Transverse colon (tissue), 4 donors: ENCODE measurements at regions of chr3 and their contacts with region 1.

Region 1: DNA sequence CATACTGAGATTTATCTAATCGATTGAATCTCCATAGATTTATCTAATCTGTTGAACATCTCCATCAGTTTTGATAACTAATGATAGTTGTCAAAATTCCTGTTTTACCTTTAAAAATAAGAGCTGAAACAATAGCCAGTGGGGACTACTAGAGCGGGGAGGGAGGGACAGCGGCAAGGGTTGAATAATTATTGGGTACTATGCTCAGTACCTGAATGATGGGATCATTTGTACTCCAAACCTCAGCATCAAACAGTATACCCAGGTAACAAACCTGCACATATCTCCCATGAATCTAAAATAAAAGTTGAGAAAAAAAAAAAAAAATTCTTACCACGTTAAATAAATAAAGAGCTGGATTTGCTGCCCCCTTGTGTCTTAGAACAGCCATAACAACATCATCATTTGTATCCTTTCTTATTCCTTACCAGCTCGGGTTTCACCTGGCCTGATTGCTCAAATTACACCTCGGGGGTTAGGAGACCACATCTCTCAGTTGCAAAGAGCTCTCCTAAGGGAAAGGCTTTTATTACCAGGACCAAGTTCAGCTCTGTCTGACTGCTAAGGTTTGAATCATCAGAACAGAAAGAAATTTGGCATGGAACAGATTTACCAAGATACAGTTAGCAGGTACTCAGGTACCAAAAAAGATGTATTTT is 25.7 kb upstream of the RPL39L start:
- DNase-seq: peak; percentile 16
- H3K4me3 ChIP-seq: no peak overlapping the region
- H3K27ac ChIP-seq: no peak overlapping the region
- H3K4me1 ChIP-seq: peaks cover 0 to 4% (median 0%) of the 10 kb centered on the region in 4 donors
- H3K27me3 ChIP-seq: no peaks in the 10 kb centered on the region
- CTCF ChIP-seq: peak; percentile 71 to 80 (median 75)
- EP300 ChIP-seq: no peak
- POLR2A ChIP-seq: no peak

Region 2: DNA sequence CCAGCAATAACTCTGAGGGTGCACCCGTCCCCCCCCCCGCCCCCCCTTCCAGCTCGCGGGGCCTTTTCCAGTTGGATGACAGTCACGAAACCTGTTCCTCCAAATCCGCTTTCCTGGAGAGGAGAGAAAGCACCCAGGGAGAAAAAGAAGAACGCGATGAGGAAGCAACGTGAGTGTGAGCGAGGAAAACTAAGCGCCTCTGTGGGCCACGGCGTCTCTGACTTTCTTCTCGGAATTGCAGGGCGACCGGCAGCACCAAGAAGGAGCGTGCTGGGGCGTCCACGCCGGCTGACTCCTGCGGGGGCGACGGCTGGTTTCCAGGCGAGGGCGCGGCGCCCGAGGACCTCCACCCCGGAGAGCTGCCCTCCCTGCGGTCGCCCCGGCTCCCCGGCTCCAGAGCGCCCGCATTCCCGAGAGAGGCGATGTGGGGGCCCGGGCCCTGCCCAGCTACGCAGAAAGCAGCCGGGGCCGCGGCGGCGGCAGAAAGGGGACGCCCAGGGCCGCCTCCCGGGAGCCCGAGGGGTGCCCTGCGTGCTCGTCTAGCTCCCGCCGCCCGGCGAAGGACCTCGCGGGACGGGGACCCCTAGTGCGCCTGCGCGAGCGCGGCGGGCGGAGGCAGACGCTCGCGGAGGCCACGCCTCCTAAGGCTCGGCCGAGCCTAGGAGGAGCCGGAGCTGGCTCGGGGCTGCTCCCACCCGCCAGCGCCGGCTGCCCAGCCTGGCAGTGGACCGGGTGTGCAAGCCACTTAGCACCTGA is 337.9 kb before region 1 on chr3:
- in situ Hi-C with region 1: loop called in 1 of 4 experiments (anchors 25 kb)
- intact Hi-C with region 1: no loop called
- DNase-seq: peak; percentile 83
- H3K4me3 ChIP-seq: peak overlapping the region; percentile 46 to 92 (median 73)
- H3K27ac ChIP-seq: peak overlapping the region in 3 of 4 donors; percentile 63 to 71 (median 66)
- H3K4me1 ChIP-seq: peaks cover 0 to 32% (median 12%) of the 10 kb centered on the region in 4 donors
- H3K27me3 ChIP-seq: peaks cover 74% of the 10 kb centered on the region
- CTCF ChIP-seq: no peak
- EP300 ChIP-seq: no peak
- POLR2A ChIP-seq: no peak

Region 3: GRCh38 chr3:186849374-186849975 is 315.5 kb before region 1 on chr3:
- in situ Hi-C with region 1: loop called (anchors 5 to 25 kb)
- intact Hi-C with region 1: loop called (anchors 10 kb)
- DNase-seq: no peak
- H3K4me3 ChIP-seq: no peak overlapping the region
- H3K27ac ChIP-seq: no peak overlapping the region
- H3K4me1 ChIP-seq: no peaks in the 10 kb centered on the region
- H3K27me3 ChIP-seq: peaks cover 19% of the 10 kb centered on the region
- CTCF ChIP-seq: peak in 3 of 5 experiments; percentile 17 to 28 (median 20)
- EP300 ChIP-seq: no peak
- POLR2A ChIP-seq: no peak

Region 4: GRCh38 chr3:187027531-187028278 is 137.3 kb before region 1 on chr3:
- in situ Hi-C with region 1: no loop called
- intact Hi-C with region 1: no loop called
- DNase-seq: peak; percentile 41
- H3K4me3 ChIP-seq: no peak overlapping the region
- H3K27ac ChIP-seq: peak overlapping the region in 3 of 4 donors; percentile 14 to 37 (median 27)
- H3K4me1 ChIP-seq: peaks cover 0 to 6% (median 0%) of the 10 kb centered on the region in 4 donors
- H3K27me3 ChIP-seq: no peaks in the 10 kb centered on the region
- CTCF ChIP-seq: no peak
- EP300 ChIP-seq: no peak
- POLR2A ChIP-seq: peak; percentile 2

Region 5: GRCh38 chr3:187112934-187113793 is 51.9 kb before region 1 on chr3:
- in situ Hi-C with region 1: loop called in 1 of 4 experiments (anchors 10 kb)
- intact Hi-C with region 1: no loop called
- DNase-seq: no peak
- H3K4me3 ChIP-seq: no peak overlapping the region
- H3K27ac ChIP-seq: no peak overlapping the region
- H3K4me1 ChIP-seq: no peaks in the 10 kb centered on the region
- H3K27me3 ChIP-seq: no peaks in the 10 kb centered on the region
- CTCF ChIP-seq: peak; percentile 46 to 56 (median 54)
- EP300 ChIP-seq: no peak
- POLR2A ChIP-seq: no peak

Region 6: GRCh38 chr3:187247398-187247797 is 82.4 kb after region 1 on chr3:
- in situ Hi-C with region 1: no loop called
- intact Hi-C with region 1: no loop called
- DNase-seq: no peak
- H3K4me3 ChIP-seq: no peak overlapping the region
- H3K27ac ChIP-seq: no peak overlapping the region
- H3K4me1 ChIP-seq: no peaks in the 10 kb centered on the region
- H3K27me3 ChIP-seq: no peaks in the 10 kb centered on the region
- CTCF ChIP-seq: no peak
- EP300 ChIP-seq: no peak
- POLR2A ChIP-seq: no peak

Region 7: GRCh38 chr3:187587076-187587475 is 422.1 kb after region 1 on chr3:
- in situ Hi-C with region 1: no loop called
- intact Hi-C with region 1: no loop called
- DNase-seq: no peak
- H3K4me3 ChIP-seq: no peak overlapping the region
- H3K27ac ChIP-seq: no peak overlapping the region
- H3K4me1 ChIP-seq: no peaks in the 10 kb centered on the region
- H3K27me3 ChIP-seq: no peaks in the 10 kb centered on the region
- CTCF ChIP-seq: no peak
- EP300 ChIP-seq: no peak
- POLR2A ChIP-seq: no peak